ENCODE measurements at regions of chr4 and their contacts with region 1.

Region 1: DNA sequence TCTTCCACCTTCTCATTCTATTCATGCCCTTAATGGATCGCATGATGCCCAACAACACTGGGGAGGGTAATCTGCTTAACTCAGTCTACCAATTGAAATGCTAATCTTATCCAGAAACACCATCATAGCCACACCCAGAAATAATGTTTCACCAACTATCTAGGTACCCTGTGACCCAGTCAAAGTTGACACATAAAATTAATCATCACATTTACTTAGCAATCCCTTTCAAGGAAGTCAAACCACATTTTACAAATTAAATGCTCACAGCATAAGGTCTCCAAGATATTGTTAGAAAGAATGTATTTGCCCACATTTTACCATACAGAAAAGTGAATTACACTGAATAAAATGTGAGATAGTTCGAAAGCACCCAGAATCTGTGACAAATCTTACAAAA is 92.5 kb downstream of the PRSS12 start:
- DNase-seq: no peak
- ATAC-seq: no peak
- H3K4me3 ChIP-seq: no peak overlapping the region
- H3K27ac ChIP-seq: no peak overlapping the region
- H3K4me1 ChIP-seq: no peaks in the 10 kb centered on the region
- H3K27me3 ChIP-seq: no peaks in the 10 kb centered on the region; a peak in 2 of 4 replicates
- CTCF ChIP-seq: no peak
- EP300 ChIP-seq: no peak
- POLR2A ChIP-seq: no peak
- RAD21 ChIP-seq: no peak

Region 2: DNA sequence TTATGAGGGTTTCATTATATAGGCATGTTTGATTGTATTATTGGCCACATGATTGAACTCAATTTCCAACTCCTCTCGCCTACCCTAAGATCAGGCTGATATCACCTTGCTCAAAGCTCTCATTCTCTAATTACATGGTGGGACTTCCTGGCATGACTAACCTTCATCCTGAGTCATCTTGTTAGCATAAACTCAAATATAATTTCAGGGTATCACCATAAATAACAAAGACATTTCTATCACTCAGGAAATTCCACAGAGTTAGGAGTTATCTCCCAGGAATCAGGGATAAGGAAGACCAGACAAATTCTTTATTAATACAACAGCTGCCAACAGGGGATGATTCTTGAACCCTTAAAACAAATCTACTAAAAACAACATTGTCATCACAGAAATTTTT is 135.3 kb before region 1 on chr4:
- CTCF ChIA-PET with region 1: no interaction called
- POLR2A ChIA-PET with region 1: no interaction called
- RAD21 ChIA-PET with region 1: no interaction called
- SMC1A ChIA-PET with region 1: no interaction called
- in situ Hi-C with region 1: no loop called
- intact Hi-C with region 1: loop called (anchors 2 kb)
- DNase-seq: no peak
- ATAC-seq: no peak
- H3K4me3 ChIP-seq: no peak overlapping the region
- H3K27ac ChIP-seq: no peak overlapping the region
- H3K4me1 ChIP-seq: no peaks in the 10 kb centered on the region
- H3K27me3 ChIP-seq: no peaks in the 10 kb centered on the region; a peak in 1 of 4 replicates
- CTCF ChIP-seq: no peak
- EP300 ChIP-seq: no peak
- POLR2A ChIP-seq: no peak
- RAD21 ChIP-seq: no peak

Region 3: DNA sequence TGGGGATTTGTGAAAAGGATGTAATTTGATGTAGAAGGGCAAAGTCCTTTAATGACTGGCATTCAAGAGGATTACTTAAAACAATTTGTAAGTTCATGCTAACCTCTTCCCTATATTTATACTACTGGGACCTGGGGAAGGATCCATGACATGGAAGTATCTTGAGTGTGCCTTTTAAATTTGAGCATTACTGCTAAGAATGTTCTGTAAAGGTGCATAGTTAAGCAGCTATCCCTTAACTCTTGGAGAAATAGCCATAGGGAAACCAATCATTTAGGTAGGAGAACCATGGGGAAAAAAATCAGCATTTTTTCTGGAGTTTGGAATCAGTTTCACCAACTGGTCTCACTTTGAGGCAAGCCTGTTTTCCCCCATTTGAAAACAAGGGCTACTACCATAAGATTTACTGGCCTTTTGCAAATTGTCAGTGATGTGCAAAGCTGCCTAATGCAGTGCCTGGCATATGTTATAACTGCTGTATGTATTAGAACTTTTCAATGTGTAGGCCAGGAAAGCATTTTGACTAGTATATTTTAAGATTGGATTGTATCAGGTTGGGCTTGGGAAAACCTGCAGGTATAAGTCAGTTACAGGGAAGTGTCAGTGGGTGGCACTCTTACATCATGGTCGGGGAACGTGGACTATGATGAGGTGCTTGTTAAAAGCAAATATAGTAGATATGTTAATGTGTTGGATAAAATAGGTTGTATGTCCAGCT is 20.4 kb after region 1 on chr4:
- CTCF ChIA-PET with region 1: no interaction called
- POLR2A ChIA-PET with region 1: no interaction called
- RAD21 ChIA-PET with region 1: no interaction called
- SMC1A ChIA-PET with region 1: no interaction called
- in situ Hi-C with region 1: no loop called
- intact Hi-C with region 1: no loop called
- DNase-seq: peak; percentile 38
- ATAC-seq: peak; percentile 29
- H3K4me3 ChIP-seq: peak overlapping the region; percentile 82; the same call in 1 of the 2 replicates
- H3K27ac ChIP-seq: peak overlapping the region; percentile 80
- H3K4me1 ChIP-seq: peaks cover 13% of the 10 kb centered on the region; the same call in 1 of the 2 replicates
- H3K27me3 ChIP-seq: no peaks in the 10 kb centered on the region
- CTCF ChIP-seq: peak; percentile 61 to 85 (median 68)
- EP300 ChIP-seq: no peak
- POLR2A ChIP-seq: no peak
- RAD21 ChIP-seq: peak; percentile 72

Region 4: GRCh38 chr4:118314221-118314620 is 53.9 kb after region 1 on chr4:
- CTCF ChIA-PET with region 1: no interaction called
- POLR2A ChIA-PET with region 1: no interaction called
- RAD21 ChIA-PET with region 1: no interaction called
- SMC1A ChIA-PET with region 1: no interaction called
- in situ Hi-C with region 1: no loop called
- intact Hi-C with region 1: no loop called
- DNase-seq: no peak
- ATAC-seq: no peak
- H3K4me3 ChIP-seq: no peak overlapping the region
- H3K27ac ChIP-seq: no peak overlapping the region
- H3K4me1 ChIP-seq: no peaks in the 10 kb centered on the region
- H3K27me3 ChIP-seq: no peaks in the 10 kb centered on the region
- CTCF ChIP-seq: no peak
- EP300 ChIP-seq: no peak
- POLR2A ChIP-seq: no peak
- RAD21 ChIP-seq: no peak

Measured in GM12878 (cell line).